ENCODE measurements at regions of chr11 and their contacts with region 1.

Region 1: DNA sequence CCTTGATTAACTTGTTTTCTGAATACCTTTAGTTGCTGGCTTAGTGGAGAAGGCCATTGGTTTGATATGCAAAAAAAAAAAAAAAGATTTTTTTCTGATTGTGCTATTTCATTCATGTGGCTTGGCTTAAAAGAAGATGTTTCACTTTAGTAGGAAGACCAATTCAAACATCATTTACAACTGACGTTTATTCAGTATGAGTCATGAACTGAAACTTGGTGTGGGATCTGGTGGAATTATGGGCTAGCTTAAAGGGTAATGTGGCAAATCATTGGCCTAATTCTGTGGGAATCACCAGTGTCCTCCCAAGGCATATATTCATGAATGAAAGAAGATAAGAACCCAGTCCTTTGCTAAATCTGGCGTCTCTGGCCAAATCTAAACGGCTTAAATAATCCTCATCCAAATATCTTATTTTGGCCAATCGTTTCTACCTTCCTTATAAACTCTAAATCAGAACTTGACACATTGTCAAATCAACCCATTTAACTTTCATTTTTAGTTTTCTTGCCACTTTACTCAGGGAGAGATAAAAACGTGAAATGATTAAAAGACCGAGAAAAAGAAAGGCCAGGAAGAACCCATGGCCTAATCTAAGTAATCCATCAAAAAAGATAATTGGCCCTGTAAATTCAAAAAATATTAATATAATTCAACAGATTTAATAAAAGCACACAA is 77.0 kb downstream of the DDIAS start:
- DNase-seq: no peak
- H3K4me3 Mint-ChIP-seq: peak overlapping the region; percentile 9
- H3K27ac Mint-ChIP-seq: peak overlapping the region; percentile 73
- H3K4me1 Mint-ChIP-seq: peaks cover 42% of the 10 kb centered on the region
- H3K27me3 Mint-ChIP-seq: no peaks in the 10 kb centered on the region

Region 2: GRCh38 chr11:82932564-82932963 is 46.0 kb before region 1 on chr11:
- intact Hi-C with region 1: loop called (anchors 2 kb)
- DNase-seq: no peak
- H3K4me3 Mint-ChIP-seq: no peak overlapping the region
- H3K27ac Mint-ChIP-seq: no peak overlapping the region
- H3K4me1 Mint-ChIP-seq: peaks cover 20% of the 10 kb centered on the region
- H3K27me3 Mint-ChIP-seq: no peaks in the 10 kb centered on the region

Region 3: DNA sequence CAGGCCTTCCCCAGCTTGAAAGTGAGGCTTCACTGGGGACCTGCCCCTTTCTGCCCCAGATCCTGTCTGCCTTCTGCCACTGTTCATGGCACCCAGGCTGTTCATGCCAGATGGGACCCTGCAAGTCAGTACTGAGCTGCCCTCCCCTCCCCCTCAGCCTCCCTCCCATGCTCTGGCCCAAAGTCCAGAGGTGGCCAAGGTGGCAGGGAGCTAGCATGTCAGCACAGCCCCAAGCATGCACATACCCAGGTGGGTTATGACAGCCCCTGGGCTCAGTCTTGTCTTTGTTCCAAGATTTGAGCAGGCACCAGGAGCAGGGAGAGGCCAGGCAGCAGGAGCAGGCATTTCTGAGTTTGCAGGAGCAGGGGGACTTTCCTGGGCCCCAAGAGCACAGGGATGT is 32.9 kb before region 1 on chr11:
- intact Hi-C with region 1: no loop called
- DNase-seq: no peak
- H3K4me3 Mint-ChIP-seq: no peak overlapping the region
- H3K27ac Mint-ChIP-seq: no peak overlapping the region
- H3K4me1 Mint-ChIP-seq: peaks cover 3% of the 10 kb centered on the region
- H3K27me3 Mint-ChIP-seq: peaks cover 18% of the 10 kb centered on the region

Region 4: DNA sequence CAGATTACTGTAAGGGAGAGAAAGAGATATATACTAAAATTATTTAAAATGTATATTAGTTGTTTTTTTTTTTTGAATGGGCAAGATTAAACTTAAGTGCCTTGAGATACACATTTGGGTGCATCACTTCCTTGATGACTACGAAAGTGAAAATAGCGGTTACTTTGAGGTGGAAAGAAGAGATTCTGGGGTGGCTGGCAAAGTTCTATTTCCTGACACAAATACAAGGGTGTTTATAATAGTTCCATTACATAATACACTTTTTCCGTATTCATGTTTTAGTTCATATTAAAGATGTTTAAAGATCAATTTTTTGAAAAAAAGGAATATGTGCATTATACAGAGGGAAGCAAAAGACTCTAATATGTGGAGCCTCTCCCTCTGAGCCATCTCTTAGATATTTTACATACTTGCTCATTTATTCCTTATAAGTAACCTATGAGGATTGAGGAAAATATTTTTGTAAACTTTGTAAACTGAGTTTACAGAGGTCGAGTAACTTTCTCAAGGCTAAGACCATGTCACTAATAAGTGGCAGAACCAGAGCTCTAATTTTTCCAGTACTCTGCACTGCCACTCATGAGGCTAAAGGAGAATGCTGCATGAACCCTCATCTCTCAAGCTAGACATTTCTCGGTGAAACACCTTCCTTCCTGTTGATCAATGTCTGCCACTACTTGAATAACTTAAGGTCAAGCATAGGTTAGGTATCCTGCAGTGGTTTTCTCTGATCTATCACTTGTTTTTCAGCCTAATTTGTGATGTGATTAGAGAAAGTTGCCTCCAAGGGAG is 18.4 kb before region 1 on chr11:
- intact Hi-C with region 1: loop called (anchors 1 kb)
- DNase-seq: peak; percentile 47
- H3K4me3 Mint-ChIP-seq: peak overlapping the region; percentile 34
- H3K27ac Mint-ChIP-seq: peak overlapping the region; percentile 31
- H3K4me1 Mint-ChIP-seq: peaks cover 52% of the 10 kb centered on the region
- H3K27me3 Mint-ChIP-seq: peaks cover 5% of the 10 kb centered on the region

Region 5: GRCh38 chr11:83007909-83008580 is 29.5 kb after region 1 on chr11:
- intact Hi-C with region 1: loop called (anchors 1 kb)
- DNase-seq: no peak
- H3K4me3 Mint-ChIP-seq: peak overlapping the region; percentile 61
- H3K27ac Mint-ChIP-seq: peak overlapping the region; percentile 65
- H3K4me1 Mint-ChIP-seq: peaks cover 47% of the 10 kb centered on the region
- H3K27me3 Mint-ChIP-seq: no peaks in the 10 kb centered on the region

Region 6: DNA sequence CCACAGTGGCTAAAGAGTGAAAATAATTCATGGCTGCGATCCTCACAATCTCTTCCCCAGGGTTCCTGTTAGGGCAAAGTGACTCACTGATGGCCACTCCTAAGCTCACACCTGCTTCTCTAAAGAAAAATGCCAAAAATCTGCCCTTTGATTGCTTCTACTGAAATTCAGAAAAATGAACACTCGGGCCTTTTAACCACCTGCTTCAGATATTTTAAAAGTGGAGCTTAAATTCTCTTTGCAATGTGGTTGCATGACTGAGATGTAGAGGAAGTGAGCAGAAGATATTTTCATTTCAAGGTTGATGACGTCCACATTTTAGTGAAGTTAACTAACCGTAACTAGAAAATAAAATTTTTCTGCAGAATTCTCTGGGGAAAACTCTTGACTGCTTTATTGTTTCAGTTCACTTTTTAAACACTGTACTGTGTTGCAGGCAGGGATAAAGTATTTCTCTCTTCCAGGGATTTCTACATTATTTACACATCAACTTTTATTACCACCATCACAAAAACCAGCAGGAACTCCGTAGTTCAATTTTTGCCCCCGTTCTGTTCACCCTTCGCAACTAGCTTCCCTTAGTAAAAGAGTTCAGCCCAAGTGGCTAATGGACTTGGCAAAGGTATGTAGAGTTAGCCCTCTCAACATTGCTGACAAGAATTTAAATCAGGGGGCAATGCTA is 84.7 kb after region 1 on chr11:
- intact Hi-C with region 1: loop called (anchors 2 kb)
- DNase-seq: no peak
- H3K4me3 Mint-ChIP-seq: peak overlapping the region; percentile 73
- H3K27ac Mint-ChIP-seq: peak overlapping the region; percentile 95
- H3K4me1 Mint-ChIP-seq: peaks cover 46% of the 10 kb centered on the region
- H3K27me3 Mint-ChIP-seq: no peaks in the 10 kb centered on the region

Measured in activated T-helper 2 cell treated with anti-CD3 and anti-CD28 coated beads, Interferon-gamma antibody, Interleukin-2, Interleukin-4, amounts not matched to agents 10 μg/mL and 5 μg/mL and 100 μg/mL, durations not matched to agents 14 hours and 24 hours and 36 hours (primary cell).